OCI-LY7 (cell line): ENCODE measurements at regions of chr19 and their contacts with region 1.

Region 1: GRCh38 chr19:45523642-45524256 is 16.5 kb downstream of the VASP start:
- DNase-seq: peak; percentile 90
- H3K4me3 ChIP-seq: no peak overlapping the region
- H3K27ac ChIP-seq: no peak overlapping the region
- H3K4me1 ChIP-seq: peaks cover 4% of the 10 kb centered on the region
- CTCF ChIP-seq: peak; percentile 98

Region 2: GRCh38 chr19:45547976-45548609 is 24.3 kb after region 1 on chr19:
- CTCF ChIA-PET with region 1: no interaction called
- POLR2A ChIA-PET with region 1: no interaction called
- intact Hi-C with region 1: no loop called
- DNase-seq: no peak
- H3K4me3 ChIP-seq: no peak overlapping the region
- H3K27ac ChIP-seq: peak overlapping the region; percentile 16
- H3K4me1 ChIP-seq: peaks cover 35% of the 10 kb centered on the region
- CTCF ChIP-seq: no peak

Region 3: DNA sequence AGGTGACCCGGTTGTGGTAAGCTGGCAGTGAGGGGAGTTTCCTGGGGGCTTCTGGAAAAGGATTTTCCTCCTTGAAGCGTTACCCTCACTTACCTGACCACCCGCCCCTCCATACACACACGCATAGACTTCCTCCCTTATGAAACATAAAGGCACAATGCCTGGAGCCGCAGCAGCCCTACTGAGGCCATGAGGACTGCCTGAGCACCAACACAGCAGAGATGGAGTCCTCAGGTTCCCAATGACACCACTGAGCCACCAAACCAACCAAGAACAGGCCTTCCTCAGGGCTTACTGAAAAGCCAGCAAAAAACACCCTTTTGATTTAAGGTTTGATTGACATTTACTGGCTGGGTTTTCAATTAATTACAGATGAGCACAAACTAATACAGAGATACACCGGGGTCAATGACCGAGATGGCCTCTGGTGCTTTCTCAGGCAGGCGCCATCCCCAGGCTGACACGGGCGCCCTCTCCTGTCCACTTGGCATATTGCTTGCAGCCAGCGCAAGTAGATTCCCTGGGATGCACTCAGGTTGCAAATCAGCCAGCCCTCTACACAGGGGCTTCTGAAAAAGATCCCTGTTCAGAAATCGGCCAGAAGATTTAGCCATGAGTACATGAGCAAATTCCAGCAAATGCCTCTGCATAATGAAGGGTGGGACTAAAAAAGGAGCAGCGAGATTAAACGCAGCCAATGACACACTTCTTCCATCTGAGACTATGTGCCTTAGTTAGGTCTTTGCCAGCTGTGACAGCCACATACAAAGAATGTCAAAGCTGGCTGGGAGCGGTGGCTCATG is 46.1 kb after region 1 on chr19:
- CTCF ChIA-PET with region 1: no interaction called
- POLR2A ChIA-PET with region 1: no interaction called
- intact Hi-C with region 1: loop called (anchors 1 kb)
- DNase-seq: peak; percentile 71
- H3K4me3 ChIP-seq: no peak overlapping the region
- H3K27ac ChIP-seq: no peak overlapping the region
- H3K4me1 ChIP-seq: peaks cover 9% of the 10 kb centered on the region
- CTCF ChIP-seq: peak; percentile 99